ENCODE measurements at regions of chr12 and their contacts with region 1.

Region 1: DNA sequence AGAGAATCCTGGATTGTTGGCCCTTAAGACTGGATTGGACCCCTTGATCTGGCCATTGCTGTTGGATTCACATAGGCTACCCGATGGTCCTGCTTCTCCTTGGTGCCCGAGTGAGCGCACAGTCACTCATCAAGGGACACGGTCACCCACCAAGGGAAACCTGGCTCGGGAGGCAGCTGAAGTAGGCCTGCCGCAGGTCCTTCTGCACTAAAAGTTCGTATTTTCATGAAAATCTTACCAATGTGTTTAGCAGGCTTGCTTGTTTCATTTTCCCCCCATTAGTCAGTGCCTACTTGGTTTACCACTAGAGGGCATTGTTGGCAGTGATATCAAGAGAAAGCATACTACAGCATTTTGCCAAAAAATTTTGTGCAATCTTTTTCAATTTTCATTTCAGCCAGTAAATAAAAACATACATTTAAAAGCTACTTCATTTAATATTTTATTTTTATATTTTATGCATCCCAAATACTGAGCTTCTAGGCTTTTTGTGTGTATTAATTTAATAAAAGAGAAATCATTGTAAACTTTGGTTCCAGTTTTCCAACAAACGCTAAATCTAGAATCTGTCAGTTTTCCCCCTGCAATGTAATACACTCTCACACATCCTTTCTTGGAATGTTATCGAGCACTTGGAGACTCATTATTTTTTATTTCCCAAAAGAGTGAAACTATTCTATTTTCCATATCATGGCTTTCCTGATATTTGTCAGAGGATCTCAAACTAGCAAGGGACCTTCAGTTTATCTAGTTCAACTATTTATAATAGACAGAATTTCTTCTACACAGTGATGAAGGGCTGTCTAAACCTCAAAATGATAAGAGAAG is 116.7 kb downstream of the LMNTD1 start:
- DNase-seq: no peak
- H3K4me3 ChIP-seq: peak overlapping the region; percentile 7 to 34 (median 24)
- H3K27ac ChIP-seq: peak overlapping the region in 1 of 4 donors; percentile 48
- H3K4me1 ChIP-seq: peaks cover 0 to 33% (median 25%) of the 10 kb centered on the region in 4 donors
- H3K27me3 ChIP-seq: no peaks in the 10 kb centered on the region
- CTCF ChIP-seq: peak; percentile 64 to 77 (median 70)
- EP300 ChIP-seq: no peak
- POLR2A ChIP-seq: no peak

Region 2: GRCh38 chr12:25829192-25829591 is 392.8 kb after region 1 on chr12:
- intact Hi-C with region 1: loop called (anchors 5 kb)
- DNase-seq: peak; percentile 84
- H3K4me3 ChIP-seq: no peak overlapping the region
- H3K27ac ChIP-seq: peak overlapping the region; percentile 27 to 77 (median 64)
- H3K4me1 ChIP-seq: peaks cover 0 to 45% (median 39%) of the 10 kb centered on the region in 4 donors
- H3K27me3 ChIP-seq: no peaks in the 10 kb centered on the region
- CTCF ChIP-seq: no peak
- EP300 ChIP-seq: peak in 2 of 4 donors; percentile 56 to 88
- POLR2A ChIP-seq: no peak

Region 3: GRCh38 chr12:26091822-26092221 is 655.4 kb after region 1 on chr12:
- intact Hi-C with region 1: loop called (anchors 5 kb)
- DNase-seq: no peak
- H3K4me3 ChIP-seq: no peak overlapping the region
- H3K27ac ChIP-seq: no peak overlapping the region
- H3K4me1 ChIP-seq: no peaks in the 10 kb centered on the region
- H3K27me3 ChIP-seq: no peaks in the 10 kb centered on the region
- CTCF ChIP-seq: peak in 1 of 4 experiments; percentile 18
- EP300 ChIP-seq: no peak
- POLR2A ChIP-seq: no peak